ENCODE measurements at regions of chr1 and their contacts with region 1.

Region 1: DNA sequence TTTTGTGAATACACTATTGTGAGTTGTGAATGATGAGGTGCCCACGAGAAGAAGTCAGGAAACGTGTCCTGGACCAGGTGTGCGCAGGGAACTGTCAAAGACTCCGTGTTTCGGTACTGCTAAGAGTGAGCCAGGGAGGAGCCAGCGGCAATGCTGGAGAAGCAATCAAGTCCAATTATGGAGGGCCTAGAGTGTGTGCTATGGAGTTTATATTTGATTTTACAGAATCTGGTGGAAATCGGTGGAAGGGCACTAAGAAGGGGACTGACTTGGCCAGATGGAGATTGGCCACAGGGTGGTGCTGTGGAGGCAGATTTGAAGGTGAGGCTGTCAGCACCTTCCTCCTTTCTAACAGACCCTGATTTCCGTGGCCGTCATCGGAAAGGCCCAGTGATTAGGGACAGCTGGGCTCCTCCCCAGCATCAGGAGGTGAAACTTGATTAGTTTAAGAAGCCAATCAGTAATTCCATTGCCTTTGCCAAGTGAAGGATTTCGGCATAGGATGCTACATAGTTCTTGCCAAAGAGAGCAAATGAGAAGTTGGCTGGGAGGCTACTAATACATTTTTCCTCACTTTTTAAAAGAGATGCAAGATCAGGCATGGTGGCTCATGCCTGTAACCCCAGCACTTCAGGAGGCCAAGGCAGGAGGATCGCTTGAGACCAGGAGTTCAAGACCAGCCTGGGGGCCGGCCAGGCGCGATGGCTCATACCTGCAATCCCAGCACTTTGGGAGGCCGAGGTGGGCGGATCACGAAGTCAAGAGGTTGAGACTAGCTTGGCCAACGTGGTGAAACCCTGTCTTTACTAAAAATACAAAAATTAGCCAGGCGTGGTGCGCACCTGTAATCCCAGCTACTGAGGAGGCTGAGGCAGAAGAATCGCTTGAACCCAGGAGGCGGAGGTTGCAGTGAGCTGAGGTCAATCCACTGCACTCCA is 7.0 kb downstream of the PTCH2 start:
- DNase-seq: peak; percentile 58 to 82 (median 75)
- ATAC-seq: peak; percentile 96
- H3K4me3 ChIP-seq: no peak overlapping the region
- H3K4me3 Mint-ChIP-seq: peak overlapping the region in 9 of 10 donors; percentile 3 to 73 (median 42)
- H3K27ac ChIP-seq: no peak overlapping the region
- H3K27ac Mint-ChIP-seq: peak overlapping the region in 8 of 9 donors; percentile 12 to 81 (median 41)
- H3K4me1 ChIP-seq: no peaks in the 10 kb centered on the region
- H3K4me1 Mint-ChIP-seq: peaks cover 7 to 19% (median 8%) of the 10 kb centered on the region in 7 donors
- H3K27me3 ChIP-seq: no peaks in the 10 kb centered on the region
- H3K27me3 Mint-ChIP-seq: peaks cover under 1 to 9% (median under 1%) of the 10 kb centered on the region in 5 donors

Region 2: GRCh38 chr1:44786138-44786840 is 49.7 kb before region 1 on chr1:
- CTCF ChIA-PET with region 1: interaction called, 4 read pairs
- POLR2A ChIA-PET with region 1: interaction called, 5 read pairs
- intact Hi-C with region 1: loop called in 1 of 2 experiments (anchors 1 kb)
- DNase-seq: peak; percentile 69 to 85 (median 76)
- ATAC-seq: peak; percentile 90
- H3K4me3 ChIP-seq: peak overlapping the region; percentile 64
- H3K4me3 Mint-ChIP-seq: peak overlapping the region; percentile 60 to 82 (median 75)
- H3K27ac ChIP-seq: peak overlapping the region; percentile 58
- H3K27ac Mint-ChIP-seq: peak overlapping the region in 8 of 9 donors; percentile 51 to 80 (median 72)
- H3K4me1 ChIP-seq: peaks cover 20 to 25% of the 10 kb centered on the region in 2 donors
- H3K4me1 Mint-ChIP-seq: peaks cover 13 to 35% (median 27%) of the 10 kb centered on the region in 7 donors
- H3K27me3 ChIP-seq: no peaks in the 10 kb centered on the region
- H3K27me3 Mint-ChIP-seq: no peaks in the 10 kb centered on the region

Region 3: DNA sequence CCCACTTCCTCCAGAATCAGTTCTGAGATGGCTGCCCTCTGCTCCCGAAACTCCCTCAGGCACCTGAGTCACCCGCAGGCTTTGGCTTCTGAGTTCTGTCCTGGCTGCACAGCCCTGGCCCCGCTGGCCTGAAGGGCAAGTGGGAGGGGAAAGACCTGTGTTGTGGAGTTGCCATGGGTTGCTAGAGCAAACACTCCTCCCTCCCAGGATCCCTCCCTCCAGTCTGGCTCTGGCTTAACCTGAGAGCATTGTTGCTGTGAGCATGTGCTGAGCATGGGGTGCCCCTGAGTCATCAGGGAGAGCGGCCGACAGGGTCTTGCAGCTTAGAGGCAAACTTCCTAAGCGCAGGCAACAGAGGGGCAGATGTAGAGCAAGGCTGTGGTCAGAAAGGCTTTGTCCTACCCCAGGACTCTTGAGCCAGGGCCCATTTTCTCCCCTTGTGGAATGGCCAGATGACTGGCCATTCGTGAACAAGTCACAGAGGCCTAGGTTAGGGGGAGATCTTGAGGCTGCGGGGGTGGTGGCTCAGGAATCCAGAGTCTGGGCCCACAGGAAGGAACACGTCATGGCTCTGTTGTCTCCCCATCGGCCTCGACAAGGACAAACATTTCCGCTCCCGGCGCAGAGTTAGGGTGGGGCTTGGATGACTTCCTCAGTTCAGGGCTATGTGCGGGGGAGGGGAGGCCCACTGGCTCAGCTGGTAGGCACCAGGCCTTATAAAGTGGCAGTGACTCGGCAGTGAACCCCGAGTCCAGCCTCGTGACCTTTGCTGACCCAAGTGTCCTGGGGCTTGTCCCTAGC is 28.5 kb before region 1 on chr1 and contains the start of gene DYNLT4:
- CTCF ChIA-PET with region 1: no interaction called
- POLR2A ChIA-PET with region 1: interaction called, 709 read pairs
- intact Hi-C with region 1: no loop called
- DNase-seq: peak; percentile 78 to 96 (median 95)
- ATAC-seq: peak; percentile 68
- H3K4me3 ChIP-seq: peak within 1 kb of the TSS; percentile 48
- H3K4me3 Mint-ChIP-seq: peak within 1 kb of the TSS; percentile 63 to 90 (median 80)
- H3K27ac ChIP-seq: peak within 1 kb of the TSS; percentile 91
- H3K27ac Mint-ChIP-seq: peak within 1 kb of the TSS; percentile 98 to 100 (median 99)
- H3K4me1 ChIP-seq: peaks cover 66 to 67% of the 10 kb centered on the region in 2 donors
- H3K4me1 Mint-ChIP-seq: peaks cover 53 to 84% (median 77%) of the 10 kb centered on the region in 7 donors
- H3K27me3 ChIP-seq: no peaks in the 10 kb centered on the region
- H3K27me3 Mint-ChIP-seq: peaks cover 0 to 3% (median 0%) of the 10 kb centered on the region in 5 donors
- total RNA-seq, gene DYNLT4: 0.31 to 9.7 (median 0.87) TPM

Region 4: GRCh38 chr1:44985747-44986359 is 149.8 kb after region 1 on chr1:
- CTCF ChIA-PET with region 1: no interaction called
- POLR2A ChIA-PET with region 1: no interaction called
- intact Hi-C with region 1: loop called in 1 of 2 experiments (anchors 1 kb)
- DNase-seq: no peak
- ATAC-seq: no peak
- H3K4me3 ChIP-seq: peak overlapping the region; percentile 77
- H3K4me3 Mint-ChIP-seq: peak overlapping the region; percentile 90 to 100 (median 98)
- H3K27ac ChIP-seq: peak overlapping the region; percentile 68
- H3K27ac Mint-ChIP-seq: peak overlapping the region; percentile 75 to 99 (median 92)
- H3K4me1 ChIP-seq: peaks cover 8 to 13% of the 10 kb centered on the region in 2 donors
- H3K4me1 Mint-ChIP-seq: peaks cover 7 to 39% (median 23%) of the 10 kb centered on the region in 7 donors
- H3K27me3 ChIP-seq: no peaks in the 10 kb centered on the region
- H3K27me3 Mint-ChIP-seq: no peaks in the 10 kb centered on the region